ENCODE measurements at regions of chr4 and their contacts with region 1.

Region 1: GRCh38 chr4:87150498-87151261 is 69.7 kb downstream of the KLHL8 start:
- DNase-seq: no peak
- ATAC-seq: peak; percentile 79

Region 2: DNA sequence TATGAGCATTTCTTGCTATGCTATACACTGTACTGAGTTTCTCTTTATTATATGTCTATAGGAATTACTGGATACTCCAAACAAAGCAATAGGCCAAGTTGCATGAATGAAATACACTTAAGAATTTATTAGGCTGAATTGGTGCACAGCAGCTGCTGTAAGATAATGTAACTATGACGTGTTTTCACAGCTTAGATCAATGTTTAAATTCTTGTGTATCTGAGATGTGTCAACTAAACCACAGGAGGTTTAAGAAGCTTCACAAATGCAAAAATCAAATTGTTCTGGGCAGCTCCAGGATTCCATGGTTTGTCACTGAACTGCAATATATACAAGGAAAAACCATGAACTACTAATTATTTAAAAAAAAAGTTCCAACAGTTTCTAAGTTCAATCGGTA is 947.5 kb before region 1 on chr4:
- intact Hi-C with region 1: no loop called
- DNase-seq: no peak
- ATAC-seq: no peak

Region 3: GRCh38 chr4:87235020-87235671 is 84.5 kb after region 1 on chr4:
- intact Hi-C with region 1: loop called (anchors 1 kb)
- DNase-seq: no peak
- ATAC-seq: no peak